ENCODE measurements at regions of chr7 and their contacts with region 1.

Region 1: DNA sequence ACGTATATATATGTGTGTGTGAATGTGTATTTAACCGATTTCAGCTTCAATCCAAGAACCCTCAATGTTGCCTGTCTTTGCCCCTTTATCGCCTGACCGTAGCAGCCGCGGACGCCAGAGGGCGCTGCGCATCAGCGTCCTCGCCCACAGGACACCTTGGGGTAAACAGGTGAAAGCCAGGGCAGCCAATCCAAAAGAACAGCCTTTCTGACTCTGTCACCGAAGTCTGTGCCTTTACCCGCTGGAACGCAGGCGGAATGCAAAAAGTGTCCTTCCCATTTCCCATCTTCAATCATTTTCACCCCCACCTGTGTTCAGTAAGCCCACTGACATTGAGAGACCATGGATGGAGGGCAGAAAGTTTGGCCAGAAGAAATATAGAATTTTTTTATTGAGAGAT is 3.6 kb downstream of the NXPH1 start:
- DNase-seq: peak; percentile 55
- H3K4me3 ChIP-seq: no peak overlapping the region
- H3K27ac ChIP-seq: no peak overlapping the region
- H3K4me1 ChIP-seq: no peaks in the 10 kb centered on the region
- CTCF ChIP-seq: peak; percentile 98

Region 2: GRCh38 chr7:8724080-8724718 is 287.2 kb after region 1 on chr7:
- CTCF ChIA-PET with region 1: no interaction called
- POLR2A ChIA-PET with region 1: no interaction called
- intact Hi-C with region 1: loop called (anchors 2 kb)
- DNase-seq: peak; percentile 40
- H3K4me3 ChIP-seq: no peak overlapping the region
- H3K27ac ChIP-seq: no peak overlapping the region
- H3K4me1 ChIP-seq: no peaks in the 10 kb centered on the region
- CTCF ChIP-seq: peak; percentile 88

Region 3: DNA sequence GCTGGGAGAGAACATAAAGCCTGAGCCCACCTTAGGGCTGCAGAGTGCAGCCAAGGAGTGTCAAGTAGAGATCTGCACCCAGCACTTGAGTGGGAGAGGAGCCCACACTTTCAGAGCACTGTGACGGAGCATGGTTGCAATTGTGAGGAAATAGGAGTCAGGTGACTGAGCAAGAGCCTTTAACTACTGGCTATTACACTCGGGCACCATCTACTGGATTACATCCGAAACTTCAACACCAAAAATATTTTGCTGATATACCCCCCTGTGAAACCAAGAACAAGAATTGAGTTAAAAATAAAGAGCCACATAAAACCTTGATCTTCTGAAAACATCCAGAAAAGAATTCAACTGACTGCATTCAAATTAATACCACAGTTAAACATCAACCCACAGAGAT is 654.3 kb after region 1 on chr7:
- CTCF ChIA-PET with region 1: no interaction called
- POLR2A ChIA-PET with region 1: no interaction called
- intact Hi-C with region 1: loop called (anchors 2 kb)
- DNase-seq: peak; percentile 14
- H3K4me3 ChIP-seq: no peak overlapping the region
- H3K27ac ChIP-seq: no peak overlapping the region
- H3K4me1 ChIP-seq: no peaks in the 10 kb centered on the region
- CTCF ChIP-seq: peak; percentile 63